Aorta (tissue), 5 donors: ENCODE measurements at regions of chr17 and their contacts with region 1.

Region 1: DNA sequence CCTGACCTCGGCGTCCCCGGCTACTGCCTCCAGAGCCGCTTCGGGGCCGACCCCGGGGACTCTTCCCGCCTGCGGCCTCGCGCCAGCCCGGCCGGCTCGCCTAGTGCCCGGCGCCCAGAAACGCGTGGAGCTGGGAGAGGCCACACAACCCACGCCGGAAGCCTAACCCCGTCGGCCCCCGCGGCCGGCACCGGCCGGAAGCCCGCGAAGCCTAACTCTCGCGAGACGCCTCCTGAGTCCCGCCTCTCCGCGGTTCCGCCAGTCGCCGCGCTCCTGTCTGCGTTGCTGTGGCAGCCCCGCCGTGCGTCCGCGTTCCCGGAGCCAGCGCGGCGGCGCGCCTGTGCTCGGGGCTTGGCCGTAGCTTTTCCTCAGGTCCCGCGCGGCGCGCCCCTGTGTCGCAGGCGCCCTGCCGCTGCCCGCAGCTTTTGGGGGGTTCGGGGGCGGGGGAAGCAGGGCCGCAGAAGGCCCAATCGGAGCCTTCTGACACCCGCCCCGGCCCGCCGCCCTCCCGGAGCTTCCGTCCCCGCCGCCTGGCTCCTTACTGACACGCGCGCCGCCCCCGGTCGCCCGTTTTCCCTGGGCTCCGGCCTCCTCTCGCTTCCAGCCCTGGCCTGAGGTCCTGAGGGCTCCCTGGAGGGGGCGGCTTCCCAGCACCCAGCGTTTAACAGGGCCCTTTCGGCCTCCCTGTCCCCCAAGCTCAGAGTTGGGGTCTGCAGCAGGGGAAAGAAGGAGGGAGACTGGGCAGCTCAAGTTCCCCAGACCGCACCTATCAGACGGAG is 21.7 kb downstream of the NPTX1 start:
- DNase-seq: peak; percentile 98 to 99
- ATAC-seq: peak; percentile 97
- H3K4me3 ChIP-seq: peak overlapping the region; percentile 71 to 73
- H3K27ac ChIP-seq: peak overlapping the region; percentile 86 to 93
- H3K4me1 ChIP-seq: no peaks in the 10 kb centered on the region
- H3K27me3 ChIP-seq: no peaks in the 10 kb centered on the region

Region 2: GRCh38 chr17:80414803-80415625 is 39.7 kb before region 1 on chr17 and contains the start of gene ENDOV:
- intact Hi-C with region 1: loop called in 1 of 2 experiments (anchors 5 kb)
- DNase-seq: peak; percentile 98 to 99
- ATAC-seq: peak; percentile 98
- H3K4me3 ChIP-seq: peak within 1 kb of the TSS; percentile 68 to 88
- H3K27ac ChIP-seq: peak within 1 kb of the TSS; percentile 28 to 90
- H3K4me1 ChIP-seq: no peaks in the 10 kb centered on the region
- H3K27me3 ChIP-seq: no peaks in the 10 kb centered on the region
- total RNA-seq, gene ENDOV: 18.2 to 28.2 TPM

Region 3: DNA sequence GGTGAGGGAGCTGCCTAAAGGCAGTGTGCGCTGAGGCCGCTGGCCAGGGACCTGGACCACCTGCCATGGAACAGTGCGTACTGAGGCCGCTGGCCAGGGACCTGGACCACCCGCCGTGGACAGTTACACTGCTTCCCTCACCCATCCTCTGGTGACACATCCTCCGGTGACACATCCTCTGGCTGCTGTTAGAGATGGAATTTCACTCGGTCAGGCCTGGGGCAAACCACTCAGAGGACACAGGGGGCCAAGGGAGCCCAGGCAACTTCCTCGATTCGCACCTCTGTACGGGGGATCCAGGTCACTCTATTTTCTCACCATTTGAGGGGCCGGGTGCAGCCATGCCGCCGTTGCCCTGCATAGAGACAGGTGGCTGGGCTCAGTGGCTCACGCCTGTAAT is 57.5 kb after region 1 on chr17:
- intact Hi-C with region 1: no loop called
- DNase-seq: no peak
- ATAC-seq: no peak
- H3K4me3 ChIP-seq: no peak overlapping the region
- H3K27ac ChIP-seq: no peak overlapping the region
- H3K4me1 ChIP-seq: no peaks in the 10 kb centered on the region
- H3K27me3 ChIP-seq: no peaks in the 10 kb centered on the region